ENCODE measurements at regions of chr7 and their contacts with region 1.

Region 1: DNA sequence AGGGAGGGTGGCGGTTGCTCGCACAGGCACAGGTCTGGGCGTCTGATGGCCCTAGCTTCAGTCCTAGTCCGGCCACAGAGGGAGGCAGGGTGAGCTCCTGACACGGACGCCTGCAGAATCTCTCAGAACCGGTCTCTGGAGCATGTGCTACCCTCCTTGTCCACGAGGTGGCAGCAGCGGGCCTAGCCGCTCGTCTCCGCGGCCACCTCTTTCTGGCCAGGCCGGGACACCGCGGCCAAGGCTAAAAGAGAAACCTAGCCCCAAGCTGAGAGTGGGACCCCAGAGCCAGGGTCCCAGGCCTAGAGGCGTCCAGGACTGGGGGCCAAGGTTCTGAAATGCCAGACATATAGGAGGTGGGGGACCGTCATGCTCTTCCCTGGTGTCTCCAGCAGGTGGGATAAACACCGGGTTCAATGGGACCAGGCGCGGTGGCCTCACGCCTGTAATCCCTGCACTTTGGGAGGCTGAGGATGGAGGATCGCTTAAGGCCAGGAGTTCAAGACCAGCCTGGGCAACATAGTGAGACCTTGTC is 3.2 kb upstream of the LAT2 start:
- DNase-seq: peak; percentile 76 to 86 (median 80)
- H3K4me3 ChIP-seq: peak overlapping the region in 2 of 3 experiments; percentile 14 to 64
- H3K4me3 Mint-ChIP-seq: peak overlapping the region; percentile 51 to 52
- H3K27ac ChIP-seq: peak overlapping the region in 1 of 2 donors; percentile 20
- H3K27ac Mint-ChIP-seq: peak overlapping the region in 3 of 7 donors; percentile 32 to 68 (median 40)
- H3K4me1 ChIP-seq: peaks cover 41 to 51% of the 10 kb centered on the region in 2 donors
- H3K4me1 Mint-ChIP-seq: peaks cover 51% of the 10 kb centered on the region
- H3K27me3 ChIP-seq: no peaks in the 10 kb centered on the region
- H3K27me3 Mint-ChIP-seq: peaks cover 0 to 6% (median 0%) of the 10 kb centered on the region in 3 donors
- CTCF ChIP-seq: peak; percentile 97

Region 2: GRCh38 chr7:74223711-74224510 is 17.3 kb after region 1 on chr7:
- intact Hi-C with region 1: loop called in 1 of 2 experiments (anchors 2 kb)
- DNase-seq: no peak
- H3K4me3 ChIP-seq: no peak overlapping the region
- H3K4me3 Mint-ChIP-seq: no peak overlapping the region
- H3K27ac ChIP-seq: peak overlapping the region in 1 of 2 donors; percentile 80
- H3K27ac Mint-ChIP-seq: peak overlapping the region; percentile 24 to 82 (median 46)
- H3K4me1 ChIP-seq: peaks cover 71 to 89% of the 10 kb centered on the region in 2 donors
- H3K4me1 Mint-ChIP-seq: peaks cover 72% of the 10 kb centered on the region
- H3K27me3 ChIP-seq: no peaks in the 10 kb centered on the region
- H3K27me3 Mint-ChIP-seq: peaks cover 0 to 2% (median 0%) of the 10 kb centered on the region in 3 donors
- CTCF ChIP-seq: no peak

Region 3: DNA sequence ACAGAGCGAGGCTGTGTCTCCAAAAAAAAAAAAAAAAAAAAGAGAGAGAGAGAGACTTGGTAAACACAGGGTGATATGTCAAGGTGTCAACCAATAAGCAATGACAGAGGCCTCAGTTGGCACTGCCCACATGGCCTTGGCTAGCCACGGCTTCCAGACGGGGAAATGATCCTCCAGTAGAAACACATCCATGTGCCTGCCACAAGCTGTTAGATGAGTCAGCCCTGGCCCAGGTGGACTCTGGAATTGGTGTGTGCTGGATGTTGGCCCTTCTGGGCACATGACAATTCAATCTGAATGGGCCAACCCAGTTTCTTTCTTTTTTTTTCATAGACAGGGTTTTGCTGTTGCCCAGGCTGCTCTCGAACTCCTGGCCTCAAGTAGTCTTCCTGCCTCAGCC is 33.8 kb after region 1 on chr7:
- intact Hi-C with region 1: loop called (anchors 5 kb)
- DNase-seq: no peak
- H3K4me3 ChIP-seq: no peak overlapping the region
- H3K4me3 Mint-ChIP-seq: no peak overlapping the region
- H3K27ac ChIP-seq: no peak overlapping the region
- H3K27ac Mint-ChIP-seq: peak overlapping the region in 1 of 7 donors; percentile 59
- H3K4me1 ChIP-seq: peaks cover 24 to 30% of the 10 kb centered on the region in 2 donors
- H3K4me1 Mint-ChIP-seq: peaks cover 24% of the 10 kb centered on the region
- H3K27me3 ChIP-seq: no peaks in the 10 kb centered on the region
- H3K27me3 Mint-ChIP-seq: no peaks in the 10 kb centered on the region
- CTCF ChIP-seq: no peak

Region 4: GRCh38 chr7:74275401-74275881 is 68.8 kb after region 1 on chr7:
- intact Hi-C with region 1: loop called in 1 of 2 experiments (anchors 2 kb)
- DNase-seq: peak in 1 of 3 donors; percentile 15
- H3K4me3 ChIP-seq: no peak overlapping the region
- H3K4me3 Mint-ChIP-seq: no peak overlapping the region
- H3K27ac ChIP-seq: no peak overlapping the region
- H3K27ac Mint-ChIP-seq: peak overlapping the region in 2 of 7 donors; percentile 2 to 30
- H3K4me1 ChIP-seq: peaks cover 28 to 30% of the 10 kb centered on the region in 2 donors
- H3K4me1 Mint-ChIP-seq: peaks cover 32% of the 10 kb centered on the region
- H3K27me3 ChIP-seq: no peaks in the 10 kb centered on the region
- H3K27me3 Mint-ChIP-seq: peaks cover 0 to 5% (median 0%) of the 10 kb centered on the region in 3 donors
- CTCF ChIP-seq: peak; percentile 58

Region 5: DNA sequence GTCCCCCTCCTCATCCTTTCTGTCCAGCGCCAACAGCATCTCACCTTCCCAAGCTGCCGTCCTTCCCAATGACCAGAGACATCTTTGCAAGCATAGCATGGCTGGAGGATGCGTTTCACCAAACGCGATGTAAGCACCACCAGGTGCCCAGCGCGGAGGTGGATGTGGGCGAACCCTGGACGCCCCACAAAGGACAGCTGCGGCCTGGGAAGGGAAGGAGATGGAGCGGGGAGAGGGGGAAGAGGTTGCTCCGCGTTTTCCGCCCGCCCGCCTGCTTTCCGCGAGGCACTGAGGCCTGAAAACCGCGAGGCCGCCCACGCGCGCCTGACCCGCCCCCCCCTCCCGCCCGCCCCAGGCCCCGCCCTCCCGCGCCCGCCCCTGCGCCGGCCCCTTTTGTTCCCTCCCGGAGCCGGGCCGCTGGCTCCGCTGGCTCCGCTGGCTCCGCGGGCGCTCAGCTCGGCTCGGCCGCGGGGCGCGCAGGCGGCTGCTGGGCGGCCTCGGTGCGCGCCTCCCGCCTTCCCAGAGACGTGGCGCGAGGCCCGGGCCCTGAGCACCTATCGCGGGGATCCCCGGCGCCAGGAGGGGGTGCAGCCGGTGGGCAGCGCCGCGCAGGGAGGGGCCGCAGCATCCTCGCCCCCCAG is 82.5 kb after region 1 on chr7 and contains the start of gene CLIP2:
- intact Hi-C with region 1: loop called in 1 of 2 experiments (anchors 5 kb)
- DNase-seq: peak; percentile 61 to 69 (median 68)
- H3K4me3 ChIP-seq: peak within 1 kb of the TSS; percentile 56 to 85 (median 74)
- H3K4me3 Mint-ChIP-seq: peak within 1 kb of the TSS; percentile 83 to 88
- H3K27ac ChIP-seq: peak within 1 kb of the TSS in 1 of 2 donors; percentile 51
- H3K27ac Mint-ChIP-seq: peak within 1 kb of the TSS in 6 of 7 donors; percentile 24 to 73 (median 62)
- H3K4me1 ChIP-seq: peaks cover 30 to 38% of the 10 kb centered on the region in 2 donors
- H3K4me1 Mint-ChIP-seq: peaks cover 47% of the 10 kb centered on the region
- H3K27me3 ChIP-seq: no peaks in the 10 kb centered on the region
- H3K27me3 Mint-ChIP-seq: peaks cover 2 to 20% (median 14%) of the 10 kb centered on the region in 3 donors
- CTCF ChIP-seq: no peak
- polyA plus RNA-seq, gene CLIP2: 1.1 to 5.2 (median 1.3) TPM

Region 6: GRCh38 chr7:74401137-74401859 is 194.6 kb after region 1 on chr7:
- intact Hi-C with region 1: loop called in 1 of 2 experiments (anchors 2 kb)
- DNase-seq: peak; percentile 49 to 61 (median 58)
- H3K4me3 ChIP-seq: no peak overlapping the region
- H3K4me3 Mint-ChIP-seq: no peak overlapping the region
- H3K27ac ChIP-seq: no peak overlapping the region
- H3K27ac Mint-ChIP-seq: peak overlapping the region in 1 of 7 donors; percentile 25
- H3K4me1 ChIP-seq: no peaks in the 10 kb centered on the region
- H3K4me1 Mint-ChIP-seq: peaks cover 6% of the 10 kb centered on the region
- H3K27me3 ChIP-seq: no peaks in the 10 kb centered on the region
- H3K27me3 Mint-ChIP-seq: no peaks in the 10 kb centered on the region
- CTCF ChIP-seq: peak; percentile 95